Mucosa of descending colon (tissue), 3 donors: ENCODE measurements at regions of chr12 and their contacts with region 1.

Region 1: GRCh38 chr12:49515266-49515665 is 23.6 kb upstream of the KCNH3 start:
- DNase-seq: no peak
- ATAC-seq: no peak
- H3K4me3 ChIP-seq: no peak overlapping the region
- H3K4me1 ChIP-seq: no peaks in the 10 kb centered on the region
- CTCF ChIP-seq: no peak

Region 2: GRCh38 chr12:49358483-49359141 is 156.7 kb before region 1 on chr12:
- intact Hi-C with region 1: loop called (anchors 2 to 10 kb)
- DNase-seq: peak in 1 of 3 donors; percentile 76
- ATAC-seq: peak; percentile 84
- H3K4me3 ChIP-seq: no peak overlapping the region
- H3K4me1 ChIP-seq: no peaks in the 10 kb centered on the region
- CTCF ChIP-seq: peak; percentile 30

Region 3: DNA sequence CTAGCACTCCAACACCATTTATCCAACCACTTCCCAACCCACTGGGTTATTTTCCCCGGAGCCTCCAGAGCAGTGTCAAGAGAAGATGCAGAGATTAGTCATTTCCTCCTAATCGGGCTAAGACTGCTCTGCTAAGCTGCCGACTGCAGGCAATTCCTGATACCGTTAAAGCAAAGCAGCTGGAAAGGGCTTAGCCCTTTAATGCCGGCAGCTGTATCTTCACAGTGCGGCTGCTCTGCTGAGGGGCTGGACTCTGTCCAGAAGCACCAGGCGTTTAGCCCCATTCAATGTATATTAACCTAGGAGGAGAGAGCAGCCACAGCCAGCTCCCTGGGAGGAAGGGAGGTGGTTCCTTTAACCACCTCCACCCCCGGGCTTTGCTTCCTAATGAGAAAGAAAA is 468.6 kb after region 1 on chr12:
- intact Hi-C with region 1: no loop called
- DNase-seq: peak in 1 of 3 donors; percentile 27
- ATAC-seq: peak; percentile 68
- H3K4me3 ChIP-seq: no peak overlapping the region
- H3K4me1 ChIP-seq: no peaks in the 10 kb centered on the region
- CTCF ChIP-seq: no peak